ENCODE measurements at regions of chr9 and their contacts with region 1.

Region 1: DNA sequence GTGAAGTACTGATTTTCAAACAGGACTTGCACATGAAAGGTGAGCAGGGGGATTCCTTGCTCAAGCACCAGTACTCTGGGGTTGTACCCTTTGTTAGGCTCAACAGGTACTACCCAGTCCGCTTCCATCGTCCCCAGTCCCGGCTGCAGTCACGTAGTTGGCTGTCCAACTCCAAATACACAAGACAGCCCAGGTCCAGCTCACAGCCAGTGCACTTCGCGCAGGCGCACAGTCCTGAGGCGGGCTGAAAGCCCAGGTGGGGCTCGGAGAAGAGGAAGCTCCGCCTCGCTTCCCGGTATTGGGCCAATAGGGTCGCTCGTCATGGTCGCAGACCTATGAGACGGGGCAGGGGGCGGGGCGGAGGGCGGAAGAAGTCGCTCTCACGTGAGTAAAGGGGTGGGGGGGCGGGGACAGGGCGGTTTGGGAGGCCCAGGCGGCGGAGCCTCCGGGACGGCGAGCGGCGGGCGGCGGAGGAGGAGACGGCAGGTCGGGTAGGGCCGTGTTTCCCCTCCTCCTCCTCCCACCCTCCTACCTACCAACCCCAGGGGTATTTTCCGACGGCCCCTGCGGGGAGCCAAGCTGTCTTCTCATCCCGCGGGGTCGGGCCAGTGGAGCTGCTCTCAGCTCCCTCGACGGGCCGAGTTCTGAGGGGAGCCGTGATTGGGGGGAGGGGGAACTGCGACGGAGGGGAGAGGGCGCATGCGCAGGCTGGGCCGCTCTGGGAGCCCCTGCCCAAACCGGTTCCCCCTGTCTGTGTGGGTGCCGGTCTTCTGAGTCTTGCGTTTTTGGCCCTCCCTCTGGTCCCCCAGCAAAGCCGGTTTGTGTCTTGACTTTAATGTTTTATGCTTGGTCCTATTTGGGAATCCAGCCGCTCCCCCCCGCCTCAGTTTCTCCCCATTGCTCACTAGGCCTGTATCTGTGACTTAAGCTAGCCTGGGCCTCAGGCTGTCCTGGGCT is at the start of gene RABGAP1:
- DNase-seq: peak; percentile 99 to 100 (median 100)
- ATAC-seq: peak; percentile 98 to 100 (median 99)
- H3K4me3 ChIP-seq: peak within 1 kb of the TSS; percentile 74 to 99 (median 86)
- H3K27ac ChIP-seq: peak within 1 kb of the TSS; percentile 69 to 95 (median 90)
- H3K4me1 ChIP-seq: peaks cover 0 to 41% (median 31%) of the 10 kb centered on the region in 12 donors
- H3K27me3 ChIP-seq: no peaks in the 10 kb centered on the region
- CTCF ChIP-seq: no peak
- POLR2A ChIP-seq: peak in 1 of 2 donors; percentile 82
- total RNA-seq, gene RABGAP1: 22.0 to 62.2 (median 45.1) TPM

Region 2: GRCh38 chr9:122846371-122846940 is 94.4 kb before region 1 on chr9:
- intact Hi-C with region 1: no loop called
- DNase-seq: no peak
- ATAC-seq: no peak
- H3K4me3 ChIP-seq: no peak overlapping the region
- H3K27ac ChIP-seq: no peak overlapping the region
- H3K4me1 ChIP-seq: no peaks in the 10 kb centered on the region
- H3K27me3 ChIP-seq: no peaks in the 10 kb centered on the region
- CTCF ChIP-seq: no peak
- POLR2A ChIP-seq: no peak

Region 3: GRCh38 chr9:122904823-122905710 is 35.8 kb before region 1 on chr9 and contains the start of gene RC3H2:
- intact Hi-C with region 1: loop called in 3 of 10 experiments (anchors 2 to 5 kb)
- DNase-seq: peak; percentile 97 to 99 (median 99)
- ATAC-seq: peak; percentile 98 to 99 (median 99)
- H3K4me3 ChIP-seq: peak within 1 kb of the TSS; percentile 75 to 93 (median 86)
- H3K27ac ChIP-seq: peak within 1 kb of the TSS; percentile 87 to 98 (median 96)
- H3K4me1 ChIP-seq: peaks cover 3 to 44% (median 29%) of the 10 kb centered on the region in 12 donors
- H3K27me3 ChIP-seq: no peaks in the 10 kb centered on the region
- CTCF ChIP-seq: peak in 1 of 12 donors; percentile 8
- POLR2A ChIP-seq: peak; percentile 90 to 98
- total RNA-seq, gene RC3H2: 36.2 to 52.2 (median 45.4) TPM

Region 4: DNA sequence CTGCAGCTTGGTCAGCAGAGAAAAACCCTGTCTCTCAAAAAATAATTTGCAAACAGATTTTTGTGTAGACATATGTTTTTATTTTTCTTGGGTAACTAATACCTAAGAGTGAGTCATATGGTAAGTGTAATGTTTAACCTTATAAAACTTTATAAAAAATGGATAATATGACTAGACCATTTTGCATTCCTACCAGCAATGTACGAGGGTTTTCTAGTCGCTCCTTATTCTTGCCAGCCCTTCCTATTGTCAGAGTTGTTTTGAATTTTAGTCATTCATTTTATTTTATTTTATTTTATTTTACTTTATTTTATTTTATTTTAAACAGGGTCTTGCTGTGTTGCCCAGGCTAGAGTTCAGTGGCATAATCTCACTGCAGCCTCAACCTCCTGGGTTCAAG is 37.7 kb after region 1 on chr9:
- intact Hi-C with region 1: loop called in 3 of 10 experiments (anchors 5 to 10 kb)
- DNase-seq: no peak
- ATAC-seq: no peak
- H3K4me3 ChIP-seq: no peak overlapping the region
- H3K27ac ChIP-seq: no peak overlapping the region
- H3K4me1 ChIP-seq: peaks cover 0 to 28% (median 16%) of the 10 kb centered on the region in 12 donors
- H3K27me3 ChIP-seq: no peaks in the 10 kb centered on the region
- CTCF ChIP-seq: no peak
- POLR2A ChIP-seq: no peak